ENCODE measurements at regions of chr9 and their contacts with region 1.

Region 1: GRCh38 chr9:131722009-131722629 is 17.8 kb downstream of the RAPGEF1 start:
- DNase-seq: no peak
- ATAC-seq: no peak
- H3K4me3 ChIP-seq: no peak overlapping the region
- H3K27ac ChIP-seq: no peak overlapping the region
- H3K4me1 ChIP-seq: peaks cover 66% of the 10 kb centered on the region
- H3K27me3 ChIP-seq: no peaks in the 10 kb centered on the region
- CTCF ChIP-seq: no peak
- EP300 ChIP-seq: no peak
- POLR2A ChIP-seq: no peak
- RAD21 ChIP-seq: no peak

Region 2: DNA sequence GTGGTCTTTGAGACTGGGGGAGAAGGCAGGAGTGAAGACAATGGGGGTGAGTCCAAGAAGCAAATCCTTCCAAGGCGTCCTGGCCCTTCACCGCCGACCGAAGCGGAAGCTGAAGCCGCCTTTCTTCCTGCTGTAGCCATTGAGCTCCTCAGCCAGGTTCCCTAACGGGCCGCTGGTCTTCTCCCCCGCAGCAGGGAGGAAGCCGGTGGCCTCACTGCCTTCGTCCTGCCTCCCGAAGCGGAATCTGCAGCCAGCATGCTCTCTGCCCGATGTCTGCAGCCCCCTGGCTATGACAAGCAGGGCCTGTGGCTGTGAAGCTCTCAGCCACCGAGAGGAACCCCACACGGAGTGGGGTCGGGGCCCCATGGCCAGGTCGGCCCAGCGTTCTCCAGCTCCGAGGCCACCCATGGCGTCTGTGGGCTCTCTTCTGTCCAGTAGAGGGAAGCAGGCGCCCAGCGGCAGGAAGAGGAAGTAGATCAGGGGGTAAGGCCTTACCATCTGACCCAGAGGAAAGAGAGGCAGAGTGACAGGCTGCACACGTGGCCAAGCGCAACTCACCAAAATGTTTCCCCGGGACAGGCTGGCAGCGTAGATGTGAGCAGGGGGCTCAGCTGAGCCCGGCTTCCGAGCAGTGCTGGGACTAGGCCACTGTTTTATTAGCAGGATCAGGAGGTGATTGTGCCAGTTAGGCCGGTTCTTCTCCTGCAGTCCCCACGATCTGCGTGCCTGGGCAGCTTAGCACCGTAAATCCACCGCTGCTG is 828.6 kb before region 1 on chr9:
- CTCF ChIA-PET with region 1: no interaction called
- POLR2A ChIA-PET with region 1: no interaction called
- RAD21 ChIA-PET with region 1: no interaction called
- SMC1A ChIA-PET with region 1: no interaction called
- in situ Hi-C with region 1: no loop called
- intact Hi-C with region 1: no loop called
- DNase-seq: no peak
- ATAC-seq: peak; percentile 56
- H3K4me3 ChIP-seq: no peak overlapping the region
- H3K27ac ChIP-seq: no peak overlapping the region
- H3K4me1 ChIP-seq: no peaks in the 10 kb centered on the region
- H3K27me3 ChIP-seq: no peaks in the 10 kb centered on the region
- CTCF ChIP-seq: peak; percentile 9 to 17 (median 15); a peak in 3 of 6 replicates
- EP300 ChIP-seq: no peak
- POLR2A ChIP-seq: peak; percentile 40; the same call in 1 of the 2 replicates
- RAD21 ChIP-seq: 0 out of 2 replicates have a peak, but pooled peaks have one; percentile 13

Region 3: GRCh38 chr9:131513177-131513576 is 208.9 kb before region 1 on chr9:
- CTCF ChIA-PET with region 1: no interaction called
- POLR2A ChIA-PET with region 1: no interaction called
- RAD21 ChIA-PET with region 1: no interaction called
- SMC1A ChIA-PET with region 1: no interaction called
- in situ Hi-C with region 1: no loop called
- intact Hi-C with region 1: no loop called
- DNase-seq: no peak
- ATAC-seq: no peak
- H3K4me3 ChIP-seq: no peak overlapping the region
- H3K27ac ChIP-seq: no peak overlapping the region
- H3K4me1 ChIP-seq: no peaks in the 10 kb centered on the region
- H3K27me3 ChIP-seq: no peaks in the 10 kb centered on the region
- CTCF ChIP-seq: no peak
- EP300 ChIP-seq: no peak
- POLR2A ChIP-seq: no peak
- RAD21 ChIP-seq: no peak

Region 4: GRCh38 chr9:131585375-131585774 is 136.7 kb before region 1 on chr9:
- CTCF ChIA-PET with region 1: no interaction called
- POLR2A ChIA-PET with region 1: interaction called, 10 read pairs
- RAD21 ChIA-PET with region 1: no interaction called
- SMC1A ChIA-PET with region 1: no interaction called
- in situ Hi-C with region 1: no loop called
- intact Hi-C with region 1: no loop called
- DNase-seq: no peak
- ATAC-seq: peak; percentile 71
- H3K4me3 ChIP-seq: no peak overlapping the region
- H3K27ac ChIP-seq: no peak overlapping the region
- H3K4me1 ChIP-seq: peaks cover 5% of the 10 kb centered on the region; the same call in 1 of the 2 replicates
- H3K27me3 ChIP-seq: no peaks in the 10 kb centered on the region
- CTCF ChIP-seq: no peak
- EP300 ChIP-seq: no peak
- POLR2A ChIP-seq: no peak
- RAD21 ChIP-seq: no peak